Left ventricle myocardium superior (tissue), 1 donor: ENCODE measurements at regions of chr20 and their contacts with region 1.

Region 1: DNA sequence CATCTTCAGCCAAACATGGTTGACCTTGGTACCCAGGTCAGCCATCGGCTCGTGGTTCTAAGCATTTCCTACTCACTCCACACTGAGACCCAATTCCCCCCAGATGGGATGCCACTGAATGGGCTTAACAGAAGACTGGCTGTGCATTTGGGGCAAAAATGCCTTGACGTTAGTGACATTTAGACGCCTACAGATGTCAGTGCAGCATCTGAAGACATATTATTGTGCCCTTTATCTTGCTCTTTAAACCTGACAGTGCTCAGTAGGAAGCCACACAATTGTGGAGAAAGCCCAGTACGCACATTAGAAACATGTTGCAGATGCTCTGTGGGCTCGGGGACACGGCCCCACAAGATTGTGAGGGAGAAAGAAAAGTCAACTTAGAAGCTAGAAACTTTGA is 414.7 kb downstream of the PTPRT start:
- DNase-seq: no peak
- ATAC-seq: no peak

Region 2: GRCh38 chr20:42836339-42836738 is 61.3 kb after region 1 on chr20:
- intact Hi-C with region 1: loop called (anchors 10 kb)
- DNase-seq: no peak
- ATAC-seq: no peak